CD4-positive, alpha-beta memory T cell (primary cell): ENCODE measurements at regions of chr7 and their contacts with region 1.

Region 1: DNA sequence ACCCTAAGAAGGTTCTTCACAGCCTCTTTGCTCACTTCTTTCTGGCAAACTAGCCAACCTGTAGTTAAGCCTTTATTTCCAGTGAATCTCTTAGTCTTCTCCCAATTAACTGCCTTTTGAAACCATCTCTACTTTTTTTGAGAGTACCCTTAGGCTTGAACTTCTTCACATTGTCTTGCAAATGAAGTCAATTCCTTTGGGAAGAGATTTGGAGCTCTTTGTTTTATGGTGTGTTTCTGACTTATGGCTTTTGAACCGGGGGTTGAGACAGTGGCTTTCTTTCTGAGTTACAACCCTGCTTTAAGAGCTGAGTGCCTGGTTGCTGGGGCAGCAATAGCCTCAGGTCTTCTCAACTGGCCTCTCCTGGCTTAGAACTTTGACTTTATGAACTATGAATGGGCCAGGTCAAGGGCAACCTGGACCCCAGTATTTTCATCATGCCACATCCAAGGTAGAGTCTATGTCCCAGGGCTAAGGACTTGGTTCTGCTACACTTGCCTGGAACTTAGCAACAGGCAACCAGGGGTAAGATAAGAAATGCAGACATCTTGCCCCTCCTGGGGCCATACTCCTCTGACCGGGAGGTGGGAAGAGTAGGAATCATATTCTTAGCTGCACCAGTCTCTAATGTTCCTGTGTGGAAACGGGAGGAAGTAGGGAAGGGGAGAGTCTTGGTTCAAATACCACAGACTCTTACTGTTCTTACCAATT is 53.0 kb downstream of the SP4 start:
- DNase-seq: no peak
- H3K4me3 ChIP-seq: no peak overlapping the region
- H3K4me3 Mint-ChIP-seq: no peak overlapping the region
- H3K27ac ChIP-seq: no peak overlapping the region
- H3K27ac Mint-ChIP-seq: peak overlapping the region in 5 of 7 donors; percentile 47 to 78 (median 63)
- H3K4me1 ChIP-seq: peaks cover 3% of the 10 kb centered on the region
- H3K4me1 Mint-ChIP-seq: peaks cover 32 to 39% (median 36%) of the 10 kb centered on the region in 4 donors
- H3K27me3 ChIP-seq: no peaks in the 10 kb centered on the region
- H3K27me3 Mint-ChIP-seq: no peaks in the 10 kb centered on the region

Region 2: GRCh38 chr7:21448974-21449373 is 31.9 kb before region 1 on chr7:
- CTCF ChIA-PET with region 1: no interaction called
- POLR2A ChIA-PET with region 1: no interaction called
- intact Hi-C with region 1: loop called (anchors 5 kb)
- DNase-seq: no peak
- H3K4me3 ChIP-seq: no peak overlapping the region
- H3K4me3 Mint-ChIP-seq: peak overlapping the region in 3 of 8 donors; percentile 25 to 79 (median 46)
- H3K27ac ChIP-seq: no peak overlapping the region
- H3K27ac Mint-ChIP-seq: peak overlapping the region in 4 of 7 donors; percentile 22 to 87 (median 74)
- H3K4me1 ChIP-seq: peaks cover 25% of the 10 kb centered on the region
- H3K4me1 Mint-ChIP-seq: peaks cover 35 to 68% (median 53%) of the 10 kb centered on the region in 4 donors
- H3K27me3 ChIP-seq: no peaks in the 10 kb centered on the region
- H3K27me3 Mint-ChIP-seq: no peaks in the 10 kb centered on the region

Region 3: GRCh38 chr7:21469894-21470293 is 11.0 kb before region 1 on chr7:
- CTCF ChIA-PET with region 1: interaction called, 5 read pairs
- POLR2A ChIA-PET with region 1: no interaction called
- intact Hi-C with region 1: loop called (anchors 2 kb)
- DNase-seq: no peak
- H3K4me3 ChIP-seq: no peak overlapping the region
- H3K4me3 Mint-ChIP-seq: no peak overlapping the region
- H3K27ac ChIP-seq: no peak overlapping the region
- H3K27ac Mint-ChIP-seq: no peak overlapping the region
- H3K4me1 ChIP-seq: no peaks in the 10 kb centered on the region
- H3K4me1 Mint-ChIP-seq: peaks cover 40 to 65% (median 43%) of the 10 kb centered on the region in 4 donors
- H3K27me3 ChIP-seq: no peaks in the 10 kb centered on the region
- H3K27me3 Mint-ChIP-seq: no peaks in the 10 kb centered on the region